ENCODE measurements at regions of chr22 and their contacts with region 1.

Region 1: GRCh38 chr22:31345331-31346254 is 553 bp downstream of the PATZ1 start:
- DNase-seq: peak; percentile 93
- ATAC-seq: peak; percentile 59
- H3K4me3 Mint-ChIP-seq: peak overlapping the region; percentile 90
- H3K27ac Mint-ChIP-seq: peak overlapping the region; percentile 92
- H3K4me1 Mint-ChIP-seq: peaks cover 44% of the 10 kb centered on the region
- H3K27me3 Mint-ChIP-seq: no peaks in the 10 kb centered on the region

Region 2: GRCh38 chr22:31107178-31107893 is 238.3 kb before region 1 on chr22 and contains the start of gene SELENOM:
- CTCF ChIA-PET with region 1: no interaction called
- POLR2A ChIA-PET with region 1: no interaction called
- intact Hi-C with region 1: loop called in 1 of 2 experiments (anchors 2 kb)
- DNase-seq: peak; percentile 94
- ATAC-seq: peak; percentile 96
- H3K4me3 Mint-ChIP-seq: peak within 1 kb of the TSS; percentile 74
- H3K27ac Mint-ChIP-seq: peak within 1 kb of the TSS; percentile 60
- H3K4me1 Mint-ChIP-seq: peaks cover 19% of the 10 kb centered on the region
- H3K27me3 Mint-ChIP-seq: no peaks in the 10 kb centered on the region
- total RNA-seq, gene SELENOM: 8.8 to 12.2 TPM

Region 3: DNA sequence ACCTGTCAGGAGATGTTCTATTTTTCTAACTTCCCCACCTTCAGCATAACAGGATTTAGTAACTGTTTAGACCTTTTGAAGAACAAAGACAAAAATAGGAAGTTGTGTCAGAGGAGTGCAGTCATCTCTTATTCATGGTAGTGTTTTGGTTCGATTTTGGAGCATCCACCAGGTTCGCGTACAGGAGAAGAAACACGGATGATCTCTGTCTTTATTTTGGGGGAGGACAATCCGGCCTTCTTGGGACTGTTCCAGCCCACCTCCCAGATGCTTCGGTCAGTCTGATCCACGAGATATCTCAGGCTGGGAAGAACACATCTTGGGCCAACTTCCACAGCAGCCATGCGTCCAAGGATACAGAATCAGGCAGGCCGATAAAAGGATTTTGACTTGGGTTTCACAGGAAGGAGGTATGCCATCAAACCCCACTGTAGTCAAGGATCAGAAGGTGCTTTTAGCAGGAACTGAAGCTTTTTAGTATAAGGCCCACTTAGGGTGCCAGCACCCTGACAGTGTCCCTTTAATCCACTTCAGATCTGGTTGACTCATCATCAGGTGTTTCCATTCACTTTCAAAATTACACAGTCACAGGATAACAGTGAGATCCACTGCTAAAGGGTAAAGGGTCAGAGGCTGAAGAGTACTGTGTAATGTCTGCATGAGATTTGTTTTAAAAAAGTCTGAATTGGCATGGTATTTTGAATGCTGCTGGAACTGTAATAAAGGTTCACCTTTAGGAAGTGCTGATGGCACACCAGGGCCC is 16.0 kb before region 1 on chr22:
- CTCF ChIA-PET with region 1: no interaction called
- POLR2A ChIA-PET with region 1: interaction called, 3 read pairs
- intact Hi-C with region 1: loop called in 1 of 2 experiments (anchors 2 kb)
- DNase-seq: no peak
- ATAC-seq: peak; percentile 98
- H3K4me3 Mint-ChIP-seq: no peak overlapping the region
- H3K27ac Mint-ChIP-seq: peak overlapping the region; percentile 71
- H3K4me1 Mint-ChIP-seq: peaks cover 24% of the 10 kb centered on the region
- H3K27me3 Mint-ChIP-seq: no peaks in the 10 kb centered on the region

Region 4: GRCh38 chr22:31489604-31490495 is 144.3 kb after region 1 on chr22 and contains the start of gene EIF4ENIF1:
- CTCF ChIA-PET with region 1: no interaction called
- POLR2A ChIA-PET with region 1: no interaction called
- intact Hi-C with region 1: loop called in 1 of 2 experiments (anchors 1 kb)
- DNase-seq: peak; percentile 92
- ATAC-seq: peak; percentile 75
- H3K4me3 Mint-ChIP-seq: peak within 1 kb of the TSS; percentile 86
- H3K27ac Mint-ChIP-seq: peak within 1 kb of the TSS; percentile 99
- H3K4me1 Mint-ChIP-seq: peaks cover 46% of the 10 kb centered on the region
- H3K27me3 Mint-ChIP-seq: no peaks in the 10 kb centered on the region
- total RNA-seq, gene EIF4ENIF1: 45.4 to 75.0 TPM

Region 5: DNA sequence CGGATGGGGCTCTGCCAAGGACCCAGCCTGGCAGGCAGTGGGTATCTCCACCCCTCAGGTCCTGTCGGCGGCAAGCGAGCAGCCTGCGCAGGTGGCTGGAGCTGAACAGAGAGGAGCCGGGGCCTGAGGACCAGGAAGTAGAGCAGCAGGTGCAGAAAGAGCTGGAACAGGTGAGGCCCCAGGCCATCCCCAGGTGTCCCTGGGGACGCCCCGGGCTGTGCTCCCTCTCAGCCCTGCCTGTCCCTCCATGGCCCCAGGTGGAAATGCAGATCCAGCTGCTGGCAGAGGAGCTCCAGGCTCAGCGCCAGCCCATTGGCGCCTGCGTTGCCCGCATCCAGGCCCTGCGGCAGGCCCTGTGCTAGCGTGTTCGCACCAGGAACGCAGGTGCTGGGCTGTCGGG is 272.5 kb after region 1 on chr22:
- CTCF ChIA-PET with region 1: no interaction called
- POLR2A ChIA-PET with region 1: no interaction called
- intact Hi-C with region 1: no loop called
- DNase-seq: no peak
- ATAC-seq: no peak
- H3K4me3 Mint-ChIP-seq: no peak overlapping the region
- H3K27ac Mint-ChIP-seq: no peak overlapping the region
- H3K4me1 Mint-ChIP-seq: peaks cover 26% of the 10 kb centered on the region
- H3K27me3 Mint-ChIP-seq: no peaks in the 10 kb centered on the region

Region 6: DNA sequence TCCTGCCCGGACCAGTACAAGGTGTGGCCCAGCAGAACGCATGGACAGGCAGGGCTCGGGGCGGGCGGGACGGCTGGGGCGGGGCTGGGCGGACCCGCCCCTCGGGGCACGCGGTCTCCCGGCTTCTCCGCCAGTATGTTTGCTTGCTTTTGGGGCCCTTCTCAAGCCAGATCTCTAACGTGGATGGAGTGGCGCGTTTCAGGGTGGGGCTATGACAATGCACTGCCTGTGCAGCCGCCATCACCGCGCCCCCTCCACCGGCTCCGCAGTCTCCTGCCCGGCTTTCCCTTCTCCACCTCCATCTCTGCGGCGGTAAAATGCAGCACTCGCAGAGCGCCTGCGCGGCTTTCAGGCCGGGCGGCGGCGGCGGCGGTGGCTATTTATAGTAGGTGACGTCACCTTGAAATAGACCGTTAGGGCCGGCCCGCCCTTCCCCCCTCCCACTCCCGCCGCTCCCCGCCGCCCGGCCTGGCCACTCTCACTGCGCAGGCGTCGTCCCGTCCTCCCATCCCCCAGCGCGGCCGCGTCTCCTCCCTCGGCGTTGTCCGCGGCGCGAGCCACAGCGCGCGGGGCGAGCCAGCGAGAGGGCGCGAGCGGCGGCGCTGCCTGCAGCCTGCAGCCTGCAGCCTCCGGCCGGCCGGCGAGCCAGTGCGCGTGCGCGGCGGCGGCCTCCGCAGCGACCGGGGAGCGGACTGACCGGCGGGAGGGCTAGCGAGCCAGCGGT is 598.5 kb after region 1 on chr22 and contains the start of gene YWHAH:
- CTCF ChIA-PET with region 1: no interaction called
- POLR2A ChIA-PET with region 1: no interaction called
- intact Hi-C with region 1: loop called in 1 of 2 experiments (anchors 10 kb)
- DNase-seq: peak; percentile 96
- ATAC-seq: peak; percentile 73
- H3K4me3 Mint-ChIP-seq: no peak within 1 kb of the TSS
- H3K27ac Mint-ChIP-seq: peak within 1 kb of the TSS; percentile 84
- H3K4me1 Mint-ChIP-seq: peaks cover 21% of the 10 kb centered on the region
- H3K27me3 Mint-ChIP-seq: no peaks in the 10 kb centered on the region
- total RNA-seq, gene YWHAH: 83.2 to 98.5 TPM

Measured in activated CD4-positive, alpha-beta T cell treated with anti-CD3 and anti-CD28 coated beads for 36 hours (primary cell).